Ovary (tissue), 10 donors: ENCODE measurements at regions of chr22 and their contacts with region 1.

Region 1: DNA sequence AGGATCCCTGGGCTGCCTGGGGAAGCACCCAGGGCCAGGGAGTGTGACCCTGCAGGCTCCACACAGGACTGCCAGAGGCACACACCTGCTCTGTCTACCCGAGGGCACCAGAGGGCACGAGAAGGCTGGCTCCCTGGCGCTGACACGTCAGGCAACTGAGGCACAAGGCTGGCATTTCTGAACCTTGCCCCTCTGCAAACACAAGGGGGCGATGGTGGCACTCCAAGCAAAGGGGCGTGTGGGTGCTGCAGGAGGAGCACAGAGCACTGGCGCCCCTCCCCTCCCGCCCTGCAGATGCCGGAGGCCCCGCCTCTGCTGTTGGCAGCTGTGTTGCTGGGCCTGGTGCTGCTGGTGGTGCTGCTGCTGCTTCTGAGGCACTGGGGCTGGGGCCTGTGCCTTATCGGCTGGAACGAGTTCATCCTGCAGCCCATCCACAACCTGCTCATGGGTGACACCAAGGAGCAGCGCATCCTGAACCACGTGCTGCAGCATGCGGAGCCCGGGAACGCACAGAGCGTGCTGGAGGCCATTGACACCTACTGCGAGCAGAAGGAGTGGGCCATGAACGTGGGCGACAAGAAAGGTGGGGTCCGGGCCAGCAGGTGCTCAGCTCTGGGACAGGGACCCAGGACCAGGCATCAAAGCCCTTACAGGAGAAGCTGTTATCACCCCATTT is 20.8 kb upstream of the TXNRD2 start:
- DNase-seq: peak in 1 of 5 donors; percentile 42
- H3K4me3 ChIP-seq: no peak overlapping the region
- H3K27ac ChIP-seq: no peak overlapping the region
- H3K4me1 ChIP-seq: peaks cover 7% of the 10 kb centered on the region
- H3K27me3 ChIP-seq: no peaks in the 10 kb centered on the region
- CTCF ChIP-seq: no peak
- EP300 ChIP-seq: no peak
- POLR2A ChIP-seq: no peak

Region 2: DNA sequence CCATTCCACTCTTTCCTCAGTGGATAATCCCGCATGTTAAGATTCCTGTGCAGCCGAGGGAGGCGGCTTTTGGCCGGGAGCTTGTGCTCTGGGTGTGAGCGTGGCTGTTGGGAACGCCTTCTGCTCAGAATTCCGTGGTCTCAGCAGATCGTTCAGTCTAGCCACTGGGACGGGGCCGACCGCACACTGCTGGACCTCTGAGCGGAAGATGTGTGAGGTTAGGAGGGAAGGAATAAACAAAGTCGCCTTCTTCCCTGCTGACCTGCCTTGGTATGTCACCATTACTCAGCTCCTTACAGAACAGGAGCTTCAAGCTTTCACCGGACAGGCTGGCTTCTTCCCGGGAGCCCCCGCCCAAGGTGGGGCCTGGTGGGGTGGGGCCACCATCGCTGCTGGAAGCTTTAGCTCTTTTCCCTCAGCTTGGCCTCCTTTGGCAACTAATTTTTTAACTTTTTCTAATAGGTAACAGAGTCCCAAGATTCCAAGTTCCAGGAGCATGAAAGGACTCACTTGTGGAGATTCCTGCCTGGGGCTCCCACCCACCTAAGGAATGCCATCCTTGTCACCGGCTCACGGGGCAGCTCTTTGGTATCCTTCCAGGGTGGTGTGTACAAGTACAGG is 270.5 kb before region 1 on chr22:
- intact Hi-C with region 1: no loop called
- DNase-seq: peak in 1 of 5 donors; percentile 53
- H3K4me3 ChIP-seq: no peak overlapping the region
- H3K27ac ChIP-seq: no peak overlapping the region
- H3K4me1 ChIP-seq: no peaks in the 10 kb centered on the region
- H3K27me3 ChIP-seq: no peaks in the 10 kb centered on the region
- CTCF ChIP-seq: no peak
- EP300 ChIP-seq: no peak
- POLR2A ChIP-seq: no peak

Region 3: GRCh38 chr22:20037419-20037818 is 75.0 kb after region 1 on chr22:
- intact Hi-C with region 1: no loop called
- DNase-seq: no peak
- H3K4me3 ChIP-seq: no peak overlapping the region
- H3K27ac ChIP-seq: no peak overlapping the region
- H3K4me1 ChIP-seq: peaks cover 3% of the 10 kb centered on the region
- H3K27me3 ChIP-seq: no peaks in the 10 kb centered on the region
- CTCF ChIP-seq: no peak
- EP300 ChIP-seq: no peak
- POLR2A ChIP-seq: no peak

Region 4: DNA sequence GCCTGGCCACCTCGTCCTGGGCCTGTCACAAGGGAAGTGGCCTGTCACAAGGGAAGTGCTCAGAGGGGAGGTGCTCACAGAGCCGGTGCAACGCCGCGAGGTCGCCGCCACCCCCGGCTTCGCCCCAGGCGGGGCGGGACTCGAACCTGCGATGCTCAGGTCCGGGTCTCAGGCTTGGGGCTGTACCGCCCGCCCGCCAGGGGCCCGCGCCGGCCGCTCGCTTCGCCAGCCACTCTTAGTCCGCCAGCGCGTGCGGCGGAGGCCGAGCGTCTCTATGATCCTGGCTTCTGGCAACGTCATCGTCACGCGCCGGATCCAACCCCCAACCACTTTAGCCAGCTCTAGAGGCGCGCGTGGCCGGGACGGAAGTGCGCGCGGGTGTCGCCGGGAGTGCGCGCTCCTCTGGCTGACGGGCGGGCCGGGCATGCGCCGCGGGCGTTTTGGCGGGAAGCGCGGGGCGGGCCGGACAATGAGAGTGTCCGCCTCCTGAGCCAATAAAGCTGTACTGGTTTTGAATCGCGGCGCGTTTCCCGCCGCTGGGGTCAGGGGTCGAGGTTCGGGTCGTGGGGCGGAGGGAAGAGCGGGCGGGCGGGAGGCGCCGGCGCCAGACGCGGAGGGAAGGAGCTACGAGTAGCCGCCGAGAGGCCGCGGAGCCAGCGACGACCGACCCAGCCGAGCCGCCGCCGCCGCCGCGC is 154.7 kb after region 1 on chr22 and contains the start of gene TRMT2A:
- intact Hi-C with region 1: loop called in 1 of 4 experiments (anchors 10 kb)
- DNase-seq: peak; percentile 96 to 99 (median 98)
- H3K4me3 ChIP-seq: peak within 1 kb of the TSS; percentile 81
- H3K27ac ChIP-seq: peak within 1 kb of the TSS; percentile 66 to 75
- H3K4me1 ChIP-seq: peaks cover 10% of the 10 kb centered on the region
- H3K27me3 ChIP-seq: no peaks in the 10 kb centered on the region
- CTCF ChIP-seq: peak in 1 of 3 donors; percentile 38
- EP300 ChIP-seq: no peak
- POLR2A ChIP-seq: peak; percentile 31
- total RNA-seq, gene TRMT2A: 35.6 to 59.7 (median 50.1) TPM